Activated T-helper 1 cell treated with anti-CD3 and anti-CD28 coated beads, Interleukin-12 subunit alpha, Interleukin-12 subunit beta, Interleukin-2, Interleukin-4 antibody, amounts not matched to agents 30 ng/mL and 10 ng/mL and 1 ng/mL, durations not matched to agents 14 hours and 24 hours and 36 hours (primary cell): ENCODE measurements at regions of chr3 and their contacts with region 1.

Region 1: DNA sequence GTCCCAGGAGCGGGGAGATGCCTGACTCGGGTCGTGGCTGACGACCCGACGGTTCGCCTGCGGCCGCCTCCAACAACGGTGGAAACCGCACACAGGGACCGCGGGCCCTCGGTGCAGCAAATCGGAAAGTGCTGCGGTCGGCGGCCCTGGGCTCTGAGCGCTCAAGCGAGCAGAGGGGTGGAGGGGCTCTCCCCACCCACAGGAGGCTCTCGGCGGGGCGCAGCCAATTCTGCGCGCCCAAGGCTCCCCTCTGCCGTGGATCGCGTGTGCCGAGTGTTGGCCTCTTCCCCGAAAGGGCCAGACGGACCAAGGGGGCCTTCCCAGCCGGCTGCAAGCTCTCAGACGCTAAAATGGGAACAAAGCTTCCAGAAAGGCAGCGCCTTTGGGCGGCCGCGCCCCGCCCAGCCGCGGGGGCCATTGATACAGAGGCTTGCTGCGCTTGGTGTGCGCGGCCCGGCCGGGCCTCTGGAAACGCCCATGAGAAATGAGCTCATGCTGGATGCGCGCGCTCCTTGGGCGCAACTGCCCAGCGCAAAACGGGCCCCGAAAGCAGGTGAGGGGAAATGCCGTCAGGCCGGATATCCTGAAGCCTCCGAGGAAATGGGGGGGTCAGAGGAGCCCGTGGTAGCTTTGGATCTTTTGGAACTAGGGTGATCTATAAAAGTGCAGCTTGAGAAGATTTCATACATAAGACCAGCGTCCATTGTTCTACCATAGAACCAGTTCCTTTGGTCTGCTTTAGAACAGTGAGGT is 1.2 kb upstream of the GSK3B start:
- DNase-seq: peak; percentile 91
- H3K4me3 Mint-ChIP-seq: no peak overlapping the region
- H3K27ac Mint-ChIP-seq: no peak overlapping the region
- H3K4me1 Mint-ChIP-seq: peaks cover 19% of the 10 kb centered on the region
- H3K27me3 Mint-ChIP-seq: no peaks in the 10 kb centered on the region

Region 2: DNA sequence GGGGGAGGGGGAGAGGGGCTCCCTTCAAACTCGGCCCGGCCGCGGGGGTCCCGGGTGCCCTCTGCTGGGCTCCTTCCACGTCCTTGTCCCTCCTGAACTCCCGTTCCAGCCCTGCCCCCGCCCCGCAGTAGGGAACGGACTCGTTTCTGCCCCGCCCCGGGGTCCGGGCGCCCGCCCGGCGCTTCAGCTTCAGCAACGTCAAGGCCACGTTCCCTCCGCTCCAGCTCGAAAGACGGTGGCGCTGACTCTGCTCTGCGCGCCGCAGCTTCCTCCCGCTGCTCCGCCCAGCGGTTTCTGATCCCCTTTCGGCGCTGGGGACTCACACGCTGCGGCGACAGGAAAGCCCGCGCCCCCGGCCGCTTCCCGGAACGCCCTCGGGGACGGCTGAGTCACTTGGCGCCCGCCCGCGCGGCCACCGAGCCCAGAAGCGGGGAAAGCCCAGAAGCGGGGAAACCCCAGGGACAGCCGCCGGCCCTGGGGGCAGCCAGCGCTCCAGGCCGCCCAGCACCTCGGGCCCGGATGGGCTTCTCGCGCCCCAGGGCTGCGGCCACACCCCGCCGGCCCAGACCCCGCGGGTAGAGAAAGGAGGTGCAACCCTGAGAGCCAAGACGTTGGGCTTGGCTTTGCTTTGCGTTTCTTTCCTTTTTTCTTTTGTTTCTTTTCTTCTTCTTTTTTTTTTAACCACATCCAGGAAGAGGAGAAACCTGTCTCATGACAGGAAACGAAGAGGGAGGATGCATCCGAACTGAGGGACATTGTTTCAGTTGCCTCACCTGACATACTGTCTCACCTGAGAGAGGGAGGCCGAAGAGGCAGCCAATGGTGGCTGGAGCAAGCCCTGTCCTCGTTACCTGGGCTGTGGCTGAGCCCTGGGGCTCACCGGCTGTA is 772.3 kb before region 1 on chr3:
- intact Hi-C with region 1: loop called (anchors 10 kb)
- DNase-seq: peak; percentile 92
- H3K4me3 Mint-ChIP-seq: peak overlapping the region; percentile 80
- H3K27ac Mint-ChIP-seq: peak overlapping the region; percentile 92
- H3K4me1 Mint-ChIP-seq: peaks cover 52% of the 10 kb centered on the region
- H3K27me3 Mint-ChIP-seq: peaks cover 27% of the 10 kb centered on the region

Region 3: GRCh38 chr3:119637679-119638525 is 457.5 kb before region 1 on chr3:
- intact Hi-C with region 1: loop called (anchors 1 kb)
- DNase-seq: no peak
- H3K4me3 Mint-ChIP-seq: peak overlapping the region; percentile 47
- H3K27ac Mint-ChIP-seq: peak overlapping the region; percentile 89
- H3K4me1 Mint-ChIP-seq: peaks cover 45% of the 10 kb centered on the region
- H3K27me3 Mint-ChIP-seq: peaks cover under 1% of the 10 kb centered on the region

Region 4: GRCh38 chr3:119885746-119886530 is 209.5 kb before region 1 on chr3:
- intact Hi-C with region 1: no loop called
- DNase-seq: no peak
- H3K4me3 Mint-ChIP-seq: no peak overlapping the region
- H3K27ac Mint-ChIP-seq: no peak overlapping the region
- H3K4me1 Mint-ChIP-seq: no peaks in the 10 kb centered on the region
- H3K27me3 Mint-ChIP-seq: no peaks in the 10 kb centered on the region

Region 5: GRCh38 chr3:119937229-119937628 is 158.2 kb before region 1 on chr3:
- intact Hi-C with region 1: loop called (anchors 1 kb)
- DNase-seq: peak; percentile 22
- H3K4me3 Mint-ChIP-seq: peak overlapping the region; percentile 8
- H3K27ac Mint-ChIP-seq: peak overlapping the region; percentile 42
- H3K4me1 Mint-ChIP-seq: peaks cover 18% of the 10 kb centered on the region
- H3K27me3 Mint-ChIP-seq: peaks cover 5% of the 10 kb centered on the region

Region 6: GRCh38 chr3:120558771-120559241 is 463.4 kb after region 1 on chr3:
- intact Hi-C with region 1: loop called (anchors 2 kb)
- DNase-seq: peak; percentile 81
- H3K4me3 Mint-ChIP-seq: peak overlapping the region; percentile 79
- H3K27ac Mint-ChIP-seq: peak overlapping the region; percentile 68
- H3K4me1 Mint-ChIP-seq: peaks cover 23% of the 10 kb centered on the region
- H3K27me3 Mint-ChIP-seq: peaks cover 2% of the 10 kb centered on the region

Region 7: DNA sequence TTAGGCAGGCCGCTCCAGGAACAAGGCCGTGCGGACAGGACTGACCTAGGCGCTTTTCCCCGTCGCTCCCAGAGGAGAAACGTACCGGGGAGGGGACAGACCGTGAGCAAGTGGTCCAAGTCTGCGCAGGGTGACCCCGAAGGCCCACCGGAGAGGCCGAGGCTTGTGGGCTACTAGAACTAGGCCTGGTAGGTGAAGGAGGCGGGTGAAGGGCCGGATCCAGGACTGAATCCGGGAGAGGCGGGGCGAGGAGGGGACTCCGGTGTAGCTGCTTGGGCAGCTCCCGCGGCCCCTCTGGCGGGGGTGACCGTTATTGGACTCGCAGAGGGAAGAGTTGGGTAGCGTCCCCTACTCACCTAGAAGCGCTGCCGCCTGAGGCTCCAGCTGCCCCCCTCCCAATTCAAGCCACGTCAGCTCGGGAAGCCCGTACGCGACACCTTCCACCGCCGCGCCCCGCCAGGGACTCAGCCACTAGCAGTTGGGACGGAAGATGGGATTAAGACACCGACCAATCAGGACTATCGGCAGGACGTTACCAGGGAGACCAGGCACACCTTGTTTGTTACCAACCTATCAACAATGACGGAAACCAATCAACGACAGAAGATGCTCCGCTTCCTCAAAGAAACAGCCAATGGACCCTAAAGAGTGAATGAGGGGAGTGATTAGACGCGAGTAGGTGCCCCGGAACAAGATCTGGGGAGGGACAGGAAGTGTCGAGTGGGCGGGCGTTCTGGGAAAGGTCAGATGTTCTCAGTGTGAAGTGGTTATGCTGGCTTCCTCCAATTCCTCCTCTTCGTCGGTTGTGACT is 1654.1 kb after region 1 on chr3 and contains the start of gene GOLGB1:
- intact Hi-C with region 1: loop called (anchors 10 kb)
- DNase-seq: peak; percentile 89
- H3K4me3 Mint-ChIP-seq: no peak within 1 kb of the TSS
- H3K27ac Mint-ChIP-seq: no peak within 1 kb of the TSS
- H3K4me1 Mint-ChIP-seq: peaks cover 5% of the 10 kb centered on the region
- H3K27me3 Mint-ChIP-seq: peaks cover 12% of the 10 kb centered on the region
- total RNA-seq, gene GOLGB1: 23.2 and 23.6 TPM in 2 replicates